ENCODE measurements at regions of chr22 and their contacts with region 1.

Region 1: GRCh38 chr22:30310881-30311771 is 15.6 kb downstream of the TBC1D10A start:
- DNase-seq: no peak
- H3K4me3 ChIP-seq: no peak overlapping the region
- CTCF ChIP-seq: no peak

Region 2: DNA sequence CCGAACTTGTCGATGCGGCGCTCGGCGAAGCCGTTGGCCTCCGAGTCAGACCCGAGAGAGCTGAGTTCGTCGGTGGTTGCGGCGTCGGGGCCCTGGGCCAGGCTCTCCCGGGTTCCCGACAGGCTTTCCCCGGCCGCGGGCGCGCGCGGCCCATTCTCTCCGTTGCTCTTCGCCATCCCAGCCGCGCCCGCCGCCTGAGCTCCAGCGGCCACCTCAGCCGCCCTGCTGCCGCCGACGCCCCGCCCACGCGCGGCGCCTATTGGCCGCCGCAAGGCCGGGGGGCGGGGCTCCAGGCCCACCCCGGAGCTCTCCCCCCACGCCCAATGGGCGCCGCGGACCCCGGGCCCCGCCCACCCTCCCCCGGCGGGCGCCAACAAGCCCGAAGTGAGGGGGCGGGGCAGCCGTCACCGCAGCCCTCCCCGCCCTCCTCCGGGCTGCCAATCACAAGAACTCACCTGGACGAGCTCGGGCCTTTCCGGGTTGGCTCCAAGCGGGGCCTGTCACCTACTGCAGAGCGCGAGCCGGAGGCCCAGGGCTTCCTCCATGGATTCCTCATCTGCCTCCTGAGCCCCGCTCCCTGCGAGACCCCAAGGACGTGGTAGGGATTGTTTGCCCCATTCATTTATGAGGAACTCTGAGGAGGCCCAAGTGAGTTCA is 15.7 kb after region 1 on chr22 and contains the start of gene TBC1D10A:
- CTCF ChIA-PET with region 1: interaction called, 13 read pairs
- POLR2A ChIA-PET with region 1: interaction called, 7 read pairs
- DNase-seq: no peak
- H3K4me3 ChIP-seq: peak within 1 kb of the TSS; percentile 87
- CTCF ChIP-seq: no peak